Psoas muscle (tissue), 8 donors: ENCODE measurements at regions of chr5 and their contacts with region 1.

Region 1: DNA sequence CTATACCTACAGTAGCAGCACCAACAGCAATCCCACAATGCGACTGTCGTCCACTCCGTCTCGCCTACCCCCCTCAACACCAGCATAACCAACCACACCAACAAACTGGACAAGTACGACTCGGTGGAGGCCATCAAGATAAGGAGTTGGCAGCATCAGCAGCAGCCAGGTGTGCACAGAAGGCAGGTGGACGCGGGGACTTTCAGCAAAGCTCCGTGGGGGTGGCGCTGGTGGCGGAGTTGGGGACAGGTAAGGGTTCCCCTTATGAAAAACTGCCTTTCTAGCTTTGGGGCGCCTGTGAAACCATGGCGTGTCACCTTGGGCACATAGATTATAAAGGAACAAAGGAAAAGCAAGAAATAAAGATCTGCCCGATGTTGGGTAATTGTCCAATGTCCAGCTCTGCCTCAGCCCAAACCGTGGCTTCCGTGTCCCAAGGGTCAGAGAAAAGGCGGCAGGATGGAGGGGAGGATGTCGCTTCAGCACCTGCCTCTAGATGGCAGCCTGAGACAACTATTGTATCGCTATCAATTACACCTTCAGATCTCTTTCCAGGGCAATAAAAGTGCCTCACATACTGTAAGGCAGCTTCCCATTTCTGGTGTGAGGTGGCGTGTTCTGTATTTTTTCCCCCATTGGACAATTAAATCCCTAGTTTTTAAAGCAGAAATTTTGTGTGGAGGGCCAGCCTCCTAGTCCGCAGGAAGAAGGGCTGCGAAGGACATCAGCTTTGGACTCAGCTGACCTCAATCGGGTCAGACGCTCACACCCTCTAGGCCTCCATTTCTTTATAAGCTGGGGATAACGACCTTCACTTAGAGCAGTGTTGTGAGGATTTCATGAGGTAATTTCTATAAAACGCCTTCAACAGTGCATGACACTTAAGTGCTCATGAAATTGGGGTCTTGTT is 58.8 kb downstream of the MTRR start:
- DNase-seq: no peak
- ATAC-seq: peak; percentile 59 to 78 (median 68)
- H3K4me3 ChIP-seq: no peak overlapping the region
- H3K27ac ChIP-seq: no peak overlapping the region
- H3K4me1 ChIP-seq: no peaks in the 10 kb centered on the region
- H3K27me3 ChIP-seq: no peaks in the 10 kb centered on the region
- CTCF ChIP-seq: peak; percentile 71

Region 2: GRCh38 chr5:9207817-9208418 is 1280.2 kb after region 1 on chr5:
- intact Hi-C with region 1: loop called (anchors 5 to 10 kb)
- DNase-seq: no peak
- ATAC-seq: no peak
- H3K4me3 ChIP-seq: no peak overlapping the region
- H3K27ac ChIP-seq: no peak overlapping the region
- H3K4me1 ChIP-seq: no peaks in the 10 kb centered on the region
- H3K27me3 ChIP-seq: no peaks in the 10 kb centered on the region
- CTCF ChIP-seq: peak; percentile 29